MCF 10A (cell line): ENCODE measurements at regions of chr9 and their contacts with region 1.

Region 1: GRCh38 chr9:6488395-6488794 is 75.4 kb downstream of the UHRF2 start:
- DNase-seq: no peak
- H3K4me3 Mint-ChIP-seq: no peak overlapping the region
- H3K27ac Mint-ChIP-seq: no peak overlapping the region
- H3K4me1 Mint-ChIP-seq: peaks cover 9% of the 10 kb centered on the region
- H3K27me3 Mint-ChIP-seq: no peaks in the 10 kb centered on the region
- CTCF ChIP-seq: no peak

Region 2: DNA sequence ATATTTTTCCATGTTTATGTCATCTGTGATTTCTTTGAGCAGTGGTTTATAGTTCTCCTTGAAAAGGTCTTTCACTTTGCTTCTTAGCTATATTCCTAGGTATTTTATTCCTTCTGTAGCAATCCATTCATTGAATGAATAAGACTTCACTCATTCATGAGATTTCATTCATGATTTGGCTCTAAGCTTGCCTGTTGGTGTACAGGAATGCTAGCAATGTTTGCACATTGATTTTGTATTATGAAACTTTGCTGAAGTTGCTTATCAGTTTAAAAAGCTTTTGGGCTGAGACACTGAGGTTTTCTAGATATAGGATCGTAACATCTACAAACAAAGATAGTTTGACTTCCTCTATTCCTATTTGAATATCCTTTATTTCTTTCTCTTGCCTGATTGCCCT is 1199.8 kb before region 1 on chr9:
- CTCF ChIA-PET with region 1: no interaction called
- POLR2A ChIA-PET with region 1: no interaction called
- intact Hi-C with region 1: no loop called
- DNase-seq: no peak
- H3K4me3 Mint-ChIP-seq: no peak overlapping the region
- H3K27ac Mint-ChIP-seq: no peak overlapping the region
- H3K4me1 Mint-ChIP-seq: no peaks in the 10 kb centered on the region
- H3K27me3 Mint-ChIP-seq: peaks cover 26% of the 10 kb centered on the region
- CTCF ChIP-seq: no peak

Region 3: GRCh38 chr9:6473149-6473548 is 15.2 kb before region 1 on chr9:
- CTCF ChIA-PET with region 1: interaction called, 10 read pairs
- POLR2A ChIA-PET with region 1: no interaction called
- intact Hi-C with region 1: no loop called
- DNase-seq: no peak
- H3K4me3 Mint-ChIP-seq: no peak overlapping the region
- H3K27ac Mint-ChIP-seq: no peak overlapping the region
- H3K4me1 Mint-ChIP-seq: peaks cover 6% of the 10 kb centered on the region
- H3K27me3 Mint-ChIP-seq: no peaks in the 10 kb centered on the region
- CTCF ChIP-seq: no peak